Activated CD4-positive, alpha-beta memory T cell treated with anti-CD3 and anti-CD28 coated beads for 36 hours (primary cell): ENCODE measurements at regions of chr18 and their contacts with region 1.

Region 1: GRCh38 chr18:79108549-79109215 is 39.5 kb downstream of the ATP9B start:
- DNase-seq: no peak
- H3K4me3 Mint-ChIP-seq: no peak overlapping the region
- H3K27ac Mint-ChIP-seq: no peak overlapping the region
- H3K4me1 Mint-ChIP-seq: peaks cover 30% of the 10 kb centered on the region
- H3K27me3 Mint-ChIP-seq: no peaks in the 10 kb centered on the region

Region 2: GRCh38 chr18:78659748-78660147 is 448.9 kb before region 1 on chr18:
- CTCF ChIA-PET with region 1: no interaction called
- POLR2A ChIA-PET with region 1: no interaction called
- intact Hi-C with region 1: no loop called
- DNase-seq: peak; percentile 24
- H3K4me3 Mint-ChIP-seq: no peak overlapping the region
- H3K27ac Mint-ChIP-seq: no peak overlapping the region
- H3K4me1 Mint-ChIP-seq: no peaks in the 10 kb centered on the region
- H3K27me3 Mint-ChIP-seq: no peaks in the 10 kb centered on the region

Region 3: DNA sequence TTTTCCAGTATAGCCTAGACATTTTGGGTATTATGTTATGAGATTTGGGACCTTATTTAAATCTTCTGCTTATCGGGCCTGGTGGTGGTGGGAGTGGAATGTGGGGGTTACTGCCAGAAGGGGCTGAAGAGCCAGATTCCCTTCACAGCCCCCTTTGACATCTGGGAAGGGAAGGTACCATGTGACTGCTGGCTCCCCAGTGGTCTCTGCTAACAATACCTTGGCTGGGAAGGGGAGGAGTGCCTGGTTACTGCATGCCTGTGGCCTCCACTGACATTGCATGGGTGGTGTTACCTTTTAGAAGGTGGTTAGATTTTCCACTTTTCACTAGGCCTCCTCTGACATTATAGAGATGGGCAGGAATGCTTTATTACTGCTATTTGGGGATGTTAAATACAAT is 31.5 kb before region 1 on chr18:
- CTCF ChIA-PET with region 1: no interaction called
- POLR2A ChIA-PET with region 1: no interaction called
- intact Hi-C with region 1: loop called (anchors 5 kb)
- DNase-seq: no peak
- H3K4me3 Mint-ChIP-seq: no peak overlapping the region
- H3K27ac Mint-ChIP-seq: no peak overlapping the region
- H3K4me1 Mint-ChIP-seq: peaks cover 57% of the 10 kb centered on the region
- H3K27me3 Mint-ChIP-seq: no peaks in the 10 kb centered on the region

Region 4: GRCh38 chr18:79123948-79124347 is 15.3 kb after region 1 on chr18:
- CTCF ChIA-PET with region 1: no interaction called
- POLR2A ChIA-PET with region 1: no interaction called
- intact Hi-C with region 1: no loop called
- DNase-seq: no peak
- H3K4me3 Mint-ChIP-seq: no peak overlapping the region
- H3K27ac Mint-ChIP-seq: no peak overlapping the region
- H3K4me1 Mint-ChIP-seq: peaks cover 8% of the 10 kb centered on the region
- H3K27me3 Mint-ChIP-seq: no peaks in the 10 kb centered on the region

Region 5: DNA sequence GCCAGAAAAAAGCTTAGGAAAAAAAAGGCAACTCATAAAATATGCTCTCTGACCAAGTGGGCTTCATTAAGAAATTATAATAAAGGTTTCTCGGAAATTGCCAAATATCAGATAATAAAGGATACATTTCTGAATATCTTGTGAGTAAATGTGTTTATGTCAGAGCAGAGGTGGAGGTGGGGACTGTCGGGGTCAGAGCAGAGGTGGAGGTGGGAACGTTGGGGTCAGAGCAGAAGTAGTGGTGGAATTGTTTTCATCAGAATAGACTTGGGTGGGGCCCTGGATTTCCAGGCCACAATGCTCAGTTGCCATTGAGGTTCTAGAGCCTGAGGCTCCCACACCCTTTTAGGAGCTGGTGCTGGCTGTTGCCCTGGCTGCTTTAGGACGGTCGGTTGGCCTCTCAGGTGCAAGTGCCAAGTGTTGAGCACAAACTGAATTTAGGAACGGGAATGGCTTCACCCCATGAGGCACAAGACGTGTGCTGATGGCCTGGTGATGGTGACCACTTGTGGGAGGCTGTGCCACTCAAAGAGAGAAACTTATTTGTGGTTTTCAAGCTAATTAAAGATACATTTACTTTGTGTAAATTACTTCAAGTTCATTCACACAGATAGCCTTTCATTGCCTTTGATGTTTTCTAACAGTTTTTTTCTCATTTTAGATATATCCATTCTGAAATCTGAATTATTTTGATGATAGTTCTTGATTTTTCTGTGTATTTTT is 92.0 kb after region 1 on chr18:
- CTCF ChIA-PET with region 1: no interaction called
- POLR2A ChIA-PET with region 1: no interaction called
- intact Hi-C with region 1: loop called (anchors 5 kb)
- DNase-seq: no peak
- H3K4me3 Mint-ChIP-seq: no peak overlapping the region
- H3K27ac Mint-ChIP-seq: no peak overlapping the region
- H3K4me1 Mint-ChIP-seq: peaks cover 22% of the 10 kb centered on the region
- H3K27me3 Mint-ChIP-seq: no peaks in the 10 kb centered on the region